Testis (tissue), 5 donors: ENCODE measurements at regions of chr4 and their contacts with region 1.

Region 1: DNA sequence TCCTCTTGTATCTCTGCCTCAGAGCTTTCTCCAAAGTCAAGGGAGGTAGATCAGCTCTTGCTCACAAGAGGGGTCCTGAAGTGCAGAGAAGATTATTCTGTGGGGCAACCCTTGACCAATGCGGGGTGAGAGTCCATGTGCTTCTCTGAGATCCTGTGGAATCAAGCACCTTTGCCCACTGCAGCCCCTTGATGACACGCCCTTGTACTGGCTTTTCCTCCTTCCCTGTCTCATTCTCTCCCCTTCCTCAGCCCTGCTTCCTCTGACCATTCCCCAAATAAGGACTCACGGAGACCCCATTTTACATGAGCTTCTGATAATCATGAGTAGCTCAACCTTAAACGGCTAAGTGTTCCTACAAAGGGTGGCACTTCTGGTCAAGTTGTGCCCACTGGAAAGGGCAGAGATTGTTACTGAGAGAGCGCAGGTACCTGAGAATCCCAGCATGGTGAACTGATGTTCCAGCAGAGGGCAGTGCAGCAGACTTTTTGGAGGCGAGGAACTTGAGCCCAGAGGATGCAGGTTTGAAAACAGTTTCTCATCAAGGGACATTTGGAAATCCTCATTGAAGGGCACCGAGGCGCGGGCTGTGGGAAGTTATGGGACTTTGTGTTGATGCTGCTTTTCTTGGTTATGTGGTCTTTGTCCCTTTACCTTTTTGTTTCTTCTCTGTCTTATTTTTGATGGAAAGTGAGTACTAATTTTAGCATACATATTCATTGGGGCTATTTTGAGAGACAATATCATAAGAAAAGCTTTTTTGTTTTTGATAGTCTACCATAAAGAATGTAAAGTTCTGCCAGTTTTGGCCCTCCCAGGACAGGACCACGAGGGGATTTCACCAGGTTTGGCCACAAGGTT is 201.3 kb downstream of the RBM46 start:
- DNase-seq: peak; percentile 85
- H3K4me3 ChIP-seq: no peak overlapping the region
- H3K27ac ChIP-seq: no peak overlapping the region
- H3K4me1 ChIP-seq: peaks cover 4% of the 10 kb centered on the region
- H3K27me3 ChIP-seq: no peaks in the 10 kb centered on the region
- CTCF ChIP-seq: peak; percentile 50 to 69 (median 67)
- POLR2A ChIP-seq: no peak

Region 2: DNA sequence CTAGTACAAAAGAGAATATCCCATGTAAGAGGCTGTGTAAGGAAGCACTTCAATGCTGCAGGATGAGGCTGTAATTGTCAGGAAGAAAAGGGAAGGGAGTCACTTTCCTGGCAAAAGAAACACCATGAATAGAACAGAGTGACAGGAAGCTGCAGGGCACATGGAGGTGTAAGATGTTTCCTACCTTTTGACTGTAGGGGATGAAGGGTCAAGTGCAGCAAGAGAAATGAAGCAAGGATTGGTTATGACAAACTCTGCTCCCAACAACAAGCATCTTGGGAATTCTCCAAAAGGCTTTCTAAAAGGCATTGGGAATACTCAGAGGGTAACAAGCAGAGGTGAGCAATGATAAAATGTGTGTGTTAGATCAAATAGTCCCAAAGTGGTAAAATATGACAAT is 151.7 kb after region 1 on chr4:
- intact Hi-C with region 1: no loop called
- DNase-seq: no peak
- H3K4me3 ChIP-seq: no peak overlapping the region
- H3K27ac ChIP-seq: no peak overlapping the region
- H3K4me1 ChIP-seq: no peaks in the 10 kb centered on the region
- H3K27me3 ChIP-seq: no peaks in the 10 kb centered on the region
- CTCF ChIP-seq: no peak
- POLR2A ChIP-seq: no peak

Region 3: GRCh38 chr4:155376387-155377268 is 394.2 kb after region 1 on chr4 and contains the start of gene MAP9:
- intact Hi-C with region 1: loop called (anchors 10 kb)
- DNase-seq: peak; percentile 99
- H3K4me3 ChIP-seq: peak within 1 kb of the TSS; percentile 59 to 69
- H3K27ac ChIP-seq: peak within 1 kb of the TSS; percentile 8 to 50
- H3K4me1 ChIP-seq: no peaks in the 10 kb centered on the region
- H3K27me3 ChIP-seq: no peaks in the 10 kb centered on the region
- CTCF ChIP-seq: no peak
- POLR2A ChIP-seq: no peak
- total RNA-seq, gene MAP9: 24.7 to 32.4 TPM